ENCODE measurements at regions of chr5 and their contacts with region 1.

Region 1: GRCh38 chr5:119418531-119419116 is 33.7 kb upstream of the HSD17B4 start:
- DNase-seq: no peak
- H3K4me3 ChIP-seq: no peak overlapping the region
- H3K4me3 Mint-ChIP-seq: no peak overlapping the region
- H3K27ac ChIP-seq: no peak overlapping the region
- H3K27ac Mint-ChIP-seq: no peak overlapping the region
- H3K4me1 ChIP-seq: peaks cover 5% of the 10 kb centered on the region
- H3K4me1 Mint-ChIP-seq: peaks cover 7 to 10% (median 8%) of the 10 kb centered on the region in 3 donors
- H3K27me3 ChIP-seq: no peaks in the 10 kb centered on the region
- H3K27me3 Mint-ChIP-seq: peaks cover 2 to 4% of the 10 kb centered on the region in 2 donors

Region 2: GRCh38 chr5:119435436-119436132 is 17.0 kb after region 1 on chr5:
- CTCF ChIA-PET with region 1: interaction called, 10 read pairs
- POLR2A ChIA-PET with region 1: no interaction called
- DNase-seq: peak; percentile 52 to 82 (median 60)
- H3K4me3 ChIP-seq: no peak overlapping the region
- H3K4me3 Mint-ChIP-seq: no peak overlapping the region
- H3K27ac ChIP-seq: no peak overlapping the region
- H3K27ac Mint-ChIP-seq: peak overlapping the region in 1 of 8 donors; percentile 76
- H3K4me1 ChIP-seq: no peaks in the 10 kb centered on the region
- H3K4me1 Mint-ChIP-seq: peaks cover 3 to 13% (median 11%) of the 10 kb centered on the region in 3 donors
- H3K27me3 ChIP-seq: no peaks in the 10 kb centered on the region
- H3K27me3 Mint-ChIP-seq: peaks cover 30 to 54% of the 10 kb centered on the region in 2 donors

Region 3: GRCh38 chr5:119527351-119527750 is 108.7 kb after region 1 on chr5:
- CTCF ChIA-PET with region 1: no interaction called
- POLR2A ChIA-PET with region 1: no interaction called
- DNase-seq: no peak
- H3K4me3 ChIP-seq: no peak overlapping the region
- H3K4me3 Mint-ChIP-seq: no peak overlapping the region
- H3K27ac ChIP-seq: no peak overlapping the region
- H3K27ac Mint-ChIP-seq: no peak overlapping the region
- H3K4me1 ChIP-seq: no peaks in the 10 kb centered on the region
- H3K4me1 Mint-ChIP-seq: no peaks in the 10 kb centered on the region
- H3K27me3 ChIP-seq: no peaks in the 10 kb centered on the region
- H3K27me3 Mint-ChIP-seq: no peaks in the 10 kb centered on the region